ENCODE measurements at regions of chr9 and their contacts with region 1.

Region 1: DNA sequence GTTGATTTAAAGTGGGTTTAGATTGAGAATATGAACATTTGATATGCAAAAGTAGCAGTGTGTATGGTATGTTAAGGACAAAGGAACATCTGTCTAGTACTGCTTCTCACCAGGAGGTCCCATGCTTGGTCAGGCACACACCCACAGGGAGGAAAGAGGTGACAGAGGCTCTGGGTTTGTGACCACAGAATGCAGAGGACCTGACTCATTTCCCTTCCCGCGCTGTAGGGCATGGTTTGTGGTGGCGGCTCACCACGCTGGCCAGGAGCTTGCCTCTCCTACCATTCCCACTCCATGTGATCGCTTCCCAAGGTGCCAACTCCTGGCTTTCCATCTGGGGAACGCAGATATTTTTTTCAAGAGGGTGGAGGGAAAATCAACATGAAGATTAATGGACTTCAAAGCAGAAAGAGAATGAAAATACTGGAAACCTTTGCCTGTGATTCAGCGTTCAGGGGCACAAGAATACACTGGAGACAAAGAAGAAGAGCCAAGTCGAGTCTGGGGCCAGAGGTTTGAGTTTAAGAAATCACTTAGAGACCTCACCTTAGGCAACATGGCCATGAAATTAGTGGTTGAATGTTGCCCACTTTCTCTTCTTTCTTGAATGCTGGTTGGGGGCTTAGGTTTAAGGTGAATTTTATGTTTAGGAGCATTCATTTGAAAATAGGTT is 477.8 kb downstream of the CCDC171 start:
- DNase-seq: peak; percentile 93
- ATAC-seq: peak; percentile 93
- H3K4me3 ChIP-seq: no peak overlapping the region
- H3K27ac ChIP-seq: peak overlapping the region; percentile 96
- H3K4me1 ChIP-seq: peaks cover 36% of the 10 kb centered on the region
- H3K27me3 ChIP-seq: no peaks in the 10 kb centered on the region
- CTCF ChIP-seq: no peak

Region 2: GRCh38 chr9:16133556-16134227 is 103.0 kb after region 1 on chr9:
- CTCF ChIA-PET with region 1: interaction called, 7 read pairs
- POLR2A ChIA-PET with region 1: no interaction called
- intact Hi-C with region 1: loop called (anchors 5 kb)
- DNase-seq: peak; percentile 88
- ATAC-seq: peak; percentile 86
- H3K4me3 ChIP-seq: peak overlapping the region; percentile 36; the same call in 1 of the 2 replicates
- H3K27ac ChIP-seq: peak overlapping the region; percentile 97
- H3K4me1 ChIP-seq: peaks cover 27% of the 10 kb centered on the region
- H3K27me3 ChIP-seq: no peaks in the 10 kb centered on the region
- CTCF ChIP-seq: peak; percentile 81

Measured in PC-3 (cell line).